Activated CD4-positive, alpha-beta memory T cell treated with anti-CD3 and anti-CD28 coated beads, Interleukin-2, amount 10 ng/mL, durations not matched to agents 7 days and 5 days (primary cell): ENCODE measurements at regions of chr12 and their contacts with region 1.

Region 1: DNA sequence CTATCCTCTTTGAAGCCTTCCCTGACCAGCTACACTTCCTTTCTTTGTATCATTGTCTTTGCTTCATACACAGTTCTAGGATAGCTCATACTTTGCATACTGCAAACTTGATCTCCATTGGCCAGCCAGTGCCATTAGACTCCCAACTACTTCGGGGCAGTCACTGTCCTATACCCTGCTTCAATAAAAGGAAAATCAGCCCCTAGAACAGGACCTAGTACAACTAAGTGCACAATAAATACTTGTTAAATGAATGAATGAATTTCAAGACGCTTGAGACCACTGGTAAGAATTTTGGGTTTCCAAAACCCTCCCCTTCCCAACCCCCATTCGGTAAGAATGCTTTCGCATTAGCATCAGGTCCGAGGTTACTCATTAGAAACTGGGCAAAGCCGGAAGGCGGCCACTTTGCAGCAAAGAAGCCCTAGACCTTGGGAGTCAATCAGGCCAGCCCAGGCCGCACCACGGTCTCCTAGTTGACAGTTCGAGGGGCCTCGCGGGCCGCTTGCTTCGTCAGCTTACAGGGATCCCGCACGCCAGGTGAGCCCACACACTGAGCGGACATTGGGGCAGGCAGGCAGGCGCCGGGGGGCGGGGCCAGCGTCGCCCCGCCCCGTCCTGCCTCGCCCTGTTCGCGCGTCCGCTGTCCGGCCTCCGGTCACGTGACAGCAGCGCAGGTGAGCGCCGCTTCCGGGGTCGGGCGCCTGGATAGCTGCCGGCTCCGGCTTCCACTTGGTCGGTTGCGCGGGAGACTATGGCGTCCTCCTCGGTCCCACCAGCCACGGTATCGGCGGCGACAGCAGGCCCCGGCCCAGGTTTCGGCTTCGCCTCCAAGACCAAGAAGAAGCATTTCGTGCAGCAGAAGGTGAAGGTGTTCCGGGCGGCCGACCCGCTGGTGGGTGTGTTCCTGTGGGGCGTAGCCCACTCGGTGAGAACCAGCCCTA is at the start of gene PIP4K2C:
- DNase-seq: peak; percentile 87
- H3K4me3 Mint-ChIP-seq: peak within 1 kb of the TSS; percentile 82
- H3K27ac Mint-ChIP-seq: peak within 1 kb of the TSS; percentile 68
- H3K4me1 Mint-ChIP-seq: peaks cover 26% of the 10 kb centered on the region
- H3K27me3 Mint-ChIP-seq: no peaks in the 10 kb centered on the region
- total RNA-seq, gene PIP4K2C: 21.6 to 21.9 TPM

Region 2: DNA sequence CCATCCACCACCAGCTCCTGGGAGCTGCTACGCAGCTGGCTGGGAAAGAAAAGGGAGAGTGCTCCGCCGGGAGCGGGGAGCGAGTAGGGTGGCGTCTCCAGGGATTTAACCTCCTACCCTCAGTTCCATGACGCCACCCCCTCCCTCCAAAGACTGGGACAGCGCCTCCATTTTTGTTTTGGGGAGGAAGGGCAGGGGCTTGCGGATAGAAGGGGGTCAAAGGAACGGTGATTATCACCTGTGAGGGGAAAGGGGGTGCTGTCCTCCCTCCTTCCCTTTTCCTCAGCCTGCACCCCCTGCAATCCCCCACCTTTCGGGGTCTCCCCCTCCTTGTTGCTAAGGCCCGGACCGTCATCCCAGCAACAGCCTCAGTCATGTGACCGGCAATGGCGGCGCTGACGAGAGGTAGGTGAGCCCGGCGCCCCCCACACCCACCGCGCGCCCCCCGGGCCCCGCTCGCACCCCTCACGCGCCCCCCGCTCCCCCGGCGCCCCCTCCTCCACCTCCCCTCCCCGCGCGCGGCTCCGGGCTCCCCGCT is 13.7 kb after region 1 on chr12 and contains the start of gene DTX3:
- CTCF ChIA-PET with region 1: interaction called, 4 read pairs
- POLR2A ChIA-PET with region 1: interaction called, 17 read pairs
- DNase-seq: peak; percentile 54
- H3K4me3 Mint-ChIP-seq: peak within 1 kb of the TSS; percentile 77
- H3K27ac Mint-ChIP-seq: peak within 1 kb of the TSS; percentile 70
- H3K4me1 Mint-ChIP-seq: peaks cover 18% of the 10 kb centered on the region
- H3K27me3 Mint-ChIP-seq: no peaks in the 10 kb centered on the region
- total RNA-seq, gene DTX3: 19.3 to 21.8 TPM